PC-3 (cell line): ENCODE measurements at regions of chr3 and their contacts with region 1.

Region 1: DNA sequence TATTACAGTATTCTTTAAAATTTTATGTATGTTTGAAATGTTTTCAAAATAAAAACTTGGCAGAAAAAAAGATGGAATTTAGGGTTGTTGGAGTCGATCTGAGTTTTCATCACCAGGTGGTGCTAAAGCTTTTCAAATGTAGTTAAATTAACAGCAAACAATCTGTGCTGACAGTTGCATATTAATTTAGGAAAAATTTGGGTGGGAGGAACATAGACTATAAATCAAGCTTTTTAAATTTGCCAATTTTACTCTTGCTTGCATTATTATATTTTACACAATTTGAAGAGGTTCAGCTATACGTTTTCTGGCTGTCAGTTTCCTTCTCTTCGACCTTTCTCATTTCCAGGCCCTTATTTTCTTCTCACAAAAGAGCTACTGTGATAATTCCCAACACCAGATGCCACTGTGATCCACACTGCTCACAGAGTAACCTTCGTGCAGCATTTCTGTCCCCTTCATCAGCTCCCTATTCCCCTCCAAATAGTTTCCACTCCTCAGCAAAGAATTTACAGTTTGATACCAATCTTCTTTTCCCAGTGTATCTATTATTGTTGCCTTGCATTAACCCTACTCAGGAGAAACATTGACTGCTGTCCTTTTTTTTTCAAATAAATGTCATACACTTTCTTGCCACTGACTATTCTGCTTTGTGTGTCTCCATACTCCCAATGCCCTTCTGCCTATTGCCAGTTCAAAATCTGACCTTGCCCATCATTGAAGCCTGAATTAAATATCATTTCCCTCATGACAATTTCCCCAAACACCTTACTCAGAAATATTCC is 53.4 kb upstream of the EIF5A2 start:
- DNase-seq: peak; percentile 74
- ATAC-seq: peak; percentile 55
- H3K4me3 ChIP-seq: no peak overlapping the region
- H3K27ac ChIP-seq: no peak overlapping the region
- H3K4me1 ChIP-seq: no peaks in the 10 kb centered on the region
- H3K27me3 ChIP-seq: no peaks in the 10 kb centered on the region
- CTCF ChIP-seq: peak; percentile 91

Region 2: GRCh38 chr3:170469151-170470062 is 492.4 kb before region 1 on chr3:
- CTCF ChIA-PET with region 1: interaction called, 14 read pairs
- POLR2A ChIA-PET with region 1: no interaction called
- intact Hi-C with region 1: no loop called
- DNase-seq: peak; percentile 68
- ATAC-seq: peak; percentile 72
- H3K4me3 ChIP-seq: no peak overlapping the region; the same call in 1 of the 2 replicates
- H3K27ac ChIP-seq: peak overlapping the region; percentile 21
- H3K4me1 ChIP-seq: peaks cover 56% of the 10 kb centered on the region
- H3K27me3 ChIP-seq: no peaks in the 10 kb centered on the region
- CTCF ChIP-seq: no peak

Region 3: DNA sequence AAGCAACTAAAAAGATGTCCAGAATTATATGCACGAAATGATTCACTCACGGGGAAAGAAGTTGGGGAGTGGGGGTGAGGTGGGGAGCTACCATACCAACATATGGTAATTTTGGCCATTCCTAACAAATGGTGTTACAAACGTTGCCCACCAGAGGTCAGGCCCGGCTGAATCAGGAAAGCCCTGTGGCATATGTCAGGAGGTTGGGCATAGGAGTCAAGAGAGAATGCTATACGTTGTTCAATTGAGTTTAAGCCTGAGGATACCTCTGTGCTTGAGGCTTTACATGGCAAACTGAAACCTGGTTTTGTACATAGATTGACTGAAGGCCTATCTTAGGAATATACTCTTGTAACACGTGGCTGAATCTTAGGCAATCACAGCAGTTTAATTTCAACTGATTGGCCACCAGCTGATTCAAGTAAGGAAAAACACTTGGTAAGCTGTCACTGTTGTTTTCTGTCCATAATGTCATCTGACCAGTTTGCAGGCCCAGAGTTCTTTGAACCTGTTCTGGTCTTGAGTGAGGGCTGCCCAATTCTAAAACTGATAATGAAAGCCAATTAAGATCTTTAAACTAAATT is 88.1 kb after region 1 on chr3:
- CTCF ChIA-PET with region 1: interaction called, 4 read pairs
- POLR2A ChIA-PET with region 1: no interaction called
- intact Hi-C with region 1: loop called (anchors 1 kb)
- DNase-seq: peak; percentile 81
- ATAC-seq: peak; percentile 98
- H3K4me3 ChIP-seq: no peak overlapping the region
- H3K27ac ChIP-seq: no peak overlapping the region
- H3K4me1 ChIP-seq: peaks cover 9% of the 10 kb centered on the region
- H3K27me3 ChIP-seq: no peaks in the 10 kb centered on the region
- CTCF ChIP-seq: peak; percentile 90

Region 4: DNA sequence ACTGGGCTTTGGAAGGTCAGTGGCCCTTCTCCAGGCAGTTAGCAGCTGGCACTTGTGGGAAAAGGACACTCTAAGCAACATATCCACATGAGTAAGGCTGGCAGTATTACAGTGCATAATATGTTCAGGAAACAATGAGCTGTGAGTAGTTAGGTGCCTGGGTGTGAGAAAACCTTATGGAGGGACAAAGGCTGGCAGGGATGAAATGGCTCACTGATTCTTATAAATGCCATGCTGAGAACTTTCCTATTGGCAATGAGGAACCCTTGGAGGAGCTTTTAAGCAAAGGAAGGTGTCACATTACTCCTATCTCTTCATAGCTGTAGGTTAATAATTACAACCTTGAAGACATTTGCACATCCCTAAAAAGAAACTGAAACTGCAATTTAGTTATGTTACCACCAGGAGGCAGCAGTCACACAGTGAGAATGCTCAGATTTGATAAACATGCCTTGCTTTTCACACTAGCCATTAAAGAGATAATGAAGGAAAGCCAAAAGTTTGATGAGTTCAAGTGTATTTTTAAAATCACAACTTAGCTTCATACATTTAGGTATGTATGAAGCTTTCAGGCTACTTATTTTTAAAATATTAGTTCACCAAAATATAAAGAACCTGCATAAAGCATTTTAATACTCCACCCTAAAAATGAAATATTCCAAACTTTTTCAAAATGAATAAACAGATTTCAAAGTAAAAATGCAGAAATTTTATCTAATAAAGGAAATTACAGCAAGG is 201.3 kb after region 1 on chr3:
- CTCF ChIA-PET with region 1: no interaction called
- POLR2A ChIA-PET with region 1: no interaction called
- intact Hi-C with region 1: loop called (anchors 1 kb)
- DNase-seq: peak; percentile 53
- ATAC-seq: no peak
- H3K4me3 ChIP-seq: no peak overlapping the region
- H3K27ac ChIP-seq: 0 out of 2 replicates have a peak overlapping the region, but pooled peaks have one; percentile 51
- H3K4me1 ChIP-seq: peaks cover 21% of the 10 kb centered on the region
- H3K27me3 ChIP-seq: no peaks in the 10 kb centered on the region
- CTCF ChIP-seq: peak; percentile 87

Region 5: GRCh38 chr3:171772427-171773056 is 810.7 kb after region 1 on chr3:
- CTCF ChIA-PET with region 1: interaction called, 3 read pairs
- POLR2A ChIA-PET with region 1: no interaction called
- intact Hi-C with region 1: loop called (anchors 10 kb)
- DNase-seq: peak; percentile 74
- ATAC-seq: peak; percentile 45
- H3K4me3 ChIP-seq: no peak overlapping the region
- H3K27ac ChIP-seq: no peak overlapping the region
- H3K4me1 ChIP-seq: peaks cover 20% of the 10 kb centered on the region
- H3K27me3 ChIP-seq: no peaks in the 10 kb centered on the region
- CTCF ChIP-seq: peak; percentile 91